Motor neuron (in vitro differentiated cells): ENCODE measurements at regions of chr4 and their contacts with region 1.

Region 1: GRCh38 chr4:75786526-75786925 is 62.1 kb downstream of the USO1 start:
- ATAC-seq: no peak
- H3K4me3 ChIP-seq: no peak overlapping the region
- H3K27ac ChIP-seq: no peak overlapping the region
- H3K4me1 ChIP-seq: no peaks in the 10 kb centered on the region

Region 2: DNA sequence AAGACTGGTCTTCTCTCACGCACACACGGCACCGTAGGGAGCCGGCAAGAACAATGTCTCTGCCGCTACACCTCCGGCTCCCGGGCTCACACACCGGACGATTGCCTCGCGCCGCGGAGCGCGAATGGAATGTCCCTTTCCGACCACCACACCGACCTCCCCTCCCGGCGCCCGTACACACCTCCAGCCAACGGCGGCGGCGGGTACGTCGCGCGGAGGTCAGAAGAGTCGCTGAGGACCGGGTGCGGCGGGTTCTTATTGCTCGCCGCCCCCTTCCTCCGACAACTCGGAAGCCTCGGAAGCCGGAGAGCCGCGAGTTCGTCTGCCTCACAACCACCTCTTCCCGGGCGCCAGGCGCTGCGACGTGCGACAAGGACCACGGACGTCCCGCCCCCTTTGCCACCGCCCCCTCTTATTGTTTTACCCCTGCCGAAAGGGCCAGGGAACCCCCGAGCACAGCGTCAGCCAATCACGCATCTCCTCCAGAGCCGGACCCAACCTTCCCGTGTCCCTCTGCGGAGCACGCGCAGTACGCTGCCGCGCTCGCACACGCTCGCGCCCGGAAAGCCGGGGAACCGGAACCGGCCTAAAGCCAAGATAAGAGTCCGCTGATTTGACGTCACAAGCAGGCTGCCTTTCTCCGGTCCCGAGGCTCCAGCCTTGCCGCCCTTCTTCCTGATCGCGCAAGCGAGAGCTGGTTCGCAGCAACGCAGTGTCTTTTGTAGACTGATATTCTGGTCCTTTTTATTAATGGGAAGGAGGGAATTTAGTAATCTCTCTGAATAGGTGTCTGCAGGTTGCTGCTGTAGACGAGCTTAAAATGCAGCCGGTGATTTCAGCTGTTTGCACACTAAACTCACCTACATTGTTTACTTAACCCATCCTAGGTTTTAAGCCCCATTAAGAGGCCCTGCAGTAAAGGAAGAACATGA is 113.2 kb before region 1 on chr4 and contains the start of gene G3BP2:
- in situ Hi-C with region 1: loop called in 1 of 9 experiments (anchors 25 kb)
- ATAC-seq: peak; percentile 91 to 97 (median 95)
- H3K4me3 ChIP-seq: peak within 1 kb of the TSS; percentile 73 to 83 (median 78)
- H3K27ac ChIP-seq: peak within 1 kb of the TSS; percentile 90 to 91
- H3K4me1 ChIP-seq: peaks cover 13 to 27% of the 10 kb centered on the region in 2 donors
- total RNA-seq, gene G3BP2: 137 to 245 (median 178) TPM